Activated naive CD4-positive, alpha-beta T cell treated with anti-CD3 and anti-CD28 coated beads for 36 hours (primary cell): ENCODE measurements at regions of chr16 and their contacts with region 1.

Region 1: DNA sequence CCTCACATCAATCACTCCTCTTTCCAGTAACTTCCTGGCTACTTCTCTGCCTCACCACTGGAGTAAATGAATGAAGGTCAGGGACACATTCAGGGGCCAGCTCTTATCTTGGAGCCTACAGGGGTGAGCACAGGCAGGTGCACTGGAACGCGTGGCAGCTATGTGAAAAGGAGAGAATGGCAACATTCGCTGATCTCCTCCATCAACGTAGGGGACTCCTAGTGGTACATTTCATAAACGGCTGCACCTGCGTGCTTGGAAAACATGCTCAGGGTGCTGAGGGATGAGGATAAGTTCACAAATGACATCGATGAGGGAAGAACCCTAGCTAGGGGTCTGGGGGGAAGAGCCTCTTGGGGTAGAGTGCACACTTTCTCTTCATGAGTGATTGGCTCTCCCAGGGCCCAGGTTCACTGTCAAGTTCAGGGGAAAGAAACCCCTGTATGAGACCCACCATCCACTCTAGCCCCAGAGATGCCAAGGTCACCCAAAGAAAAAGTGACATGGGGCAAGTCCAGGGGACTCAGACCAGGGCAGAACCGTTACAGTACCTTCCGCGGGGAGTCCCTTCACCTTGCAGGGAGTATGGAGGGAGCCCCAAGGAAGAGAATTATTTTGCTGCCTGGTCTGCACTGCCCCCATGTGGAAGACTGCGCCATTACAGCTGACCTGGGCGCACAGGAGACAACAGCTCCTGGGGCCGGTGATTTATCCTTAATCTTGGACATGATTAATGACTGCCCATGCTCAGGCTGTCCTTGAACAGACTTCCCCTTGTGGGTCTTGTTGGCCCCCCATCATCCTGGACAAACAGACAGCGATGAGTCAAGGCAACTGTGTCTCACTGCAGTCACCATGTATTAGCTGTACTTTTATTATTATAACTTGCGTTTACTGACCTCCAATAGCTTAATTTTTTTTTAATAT is 30.1 kb downstream of the VAC14 start:
- DNase-seq: peak; percentile 83
- H3K4me3 Mint-ChIP-seq: no peak overlapping the region
- H3K27ac Mint-ChIP-seq: no peak overlapping the region
- H3K4me1 Mint-ChIP-seq: peaks cover 3% of the 10 kb centered on the region
- H3K27me3 Mint-ChIP-seq: no peaks in the 10 kb centered on the region

Region 2: GRCh38 chr16:70370924-70371323 is 400.0 kb before region 1 on chr16:
- CTCF ChIA-PET with region 1: no interaction called
- intact Hi-C with region 1: loop called (anchors 1 kb)
- DNase-seq: no peak
- H3K4me3 Mint-ChIP-seq: no peak overlapping the region
- H3K27ac Mint-ChIP-seq: no peak overlapping the region
- H3K4me1 Mint-ChIP-seq: peaks cover 2% of the 10 kb centered on the region
- H3K27me3 Mint-ChIP-seq: no peaks in the 10 kb centered on the region

Region 3: DNA sequence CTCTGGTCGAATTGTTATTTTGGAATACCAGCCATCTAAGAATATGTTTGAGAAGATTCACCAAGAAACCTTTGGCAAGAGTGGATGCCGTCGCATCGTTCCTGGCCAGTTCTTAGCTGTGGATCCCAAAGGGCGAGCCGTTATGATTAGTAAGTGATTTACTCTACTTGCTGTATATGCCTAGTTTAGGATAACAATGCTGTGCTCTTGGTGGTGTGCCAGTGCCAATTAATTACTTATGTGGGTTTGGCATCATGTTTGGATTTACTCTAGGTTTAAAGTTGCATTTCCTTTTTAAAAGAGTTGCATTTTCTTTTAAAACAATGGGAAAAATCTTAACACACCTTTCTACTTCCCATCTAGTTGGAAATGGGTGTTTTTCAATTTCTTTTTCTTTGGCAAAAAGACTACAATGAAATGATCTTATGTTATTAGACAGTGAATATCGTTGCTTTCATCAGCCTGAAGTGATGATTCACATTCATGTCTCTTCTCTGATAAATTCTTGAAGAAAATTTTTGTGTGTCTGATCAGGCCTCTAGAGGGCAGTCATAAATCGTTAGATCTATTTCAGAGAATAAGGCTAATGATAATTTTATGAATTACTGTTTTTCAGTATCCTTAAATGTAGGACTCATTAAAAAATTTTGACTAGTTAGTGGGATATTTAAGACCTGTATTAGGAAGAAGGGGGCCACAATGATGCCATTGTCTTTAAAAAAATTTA is 241.7 kb before region 1 on chr16:
- CTCF ChIA-PET with region 1: no interaction called
- intact Hi-C with region 1: no loop called
- DNase-seq: no peak
- H3K4me3 Mint-ChIP-seq: peak overlapping the region; percentile 15
- H3K27ac Mint-ChIP-seq: peak overlapping the region; percentile 70
- H3K4me1 Mint-ChIP-seq: peaks cover 60% of the 10 kb centered on the region
- H3K27me3 Mint-ChIP-seq: no peaks in the 10 kb centered on the region

Region 4: DNA sequence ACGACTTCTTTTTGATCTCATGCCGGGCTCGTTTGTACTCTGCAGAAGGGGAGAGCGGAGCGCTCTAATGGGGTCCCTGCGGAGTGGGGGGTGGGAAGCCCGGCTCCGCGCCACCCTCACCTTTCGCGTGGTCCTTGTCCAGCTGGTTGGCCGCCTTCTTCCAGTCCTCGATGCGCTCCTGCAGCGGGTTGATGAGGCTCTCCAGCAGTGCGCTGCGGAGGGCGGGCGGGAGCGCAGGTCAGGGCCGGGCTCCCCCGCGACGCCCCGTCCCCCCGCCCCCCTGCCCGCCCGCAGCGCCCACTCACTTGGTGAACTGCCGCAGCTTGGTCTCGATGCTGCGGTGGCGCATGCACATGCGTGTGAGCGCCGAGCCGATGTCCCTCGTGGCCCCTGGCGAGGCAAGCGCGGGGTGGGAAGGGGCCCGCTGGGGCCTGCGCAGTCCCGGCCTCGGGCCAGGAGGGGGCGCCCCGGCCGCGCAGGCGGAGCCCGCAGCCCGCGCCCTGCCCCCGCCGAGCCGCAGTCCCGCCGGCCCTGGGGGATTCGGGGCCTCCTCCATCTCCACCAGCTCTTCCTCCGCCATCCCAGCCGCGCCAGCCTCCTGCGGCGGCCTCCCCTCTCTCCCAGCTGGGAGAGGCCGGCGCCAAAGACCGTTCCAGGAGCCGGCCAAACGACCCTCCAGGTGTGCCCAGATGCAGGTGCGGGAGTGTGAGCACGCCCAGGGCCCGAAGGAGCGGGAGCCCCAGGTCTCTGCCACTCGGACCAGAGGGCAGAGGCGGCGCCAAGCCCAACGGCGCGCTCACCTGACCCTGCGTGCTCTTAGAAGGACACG is 91.0 kb before region 1 on chr16:
- CTCF ChIA-PET with region 1: interaction called, 70 read pairs
- intact Hi-C with region 1: loop called (anchors 1 kb)
- DNase-seq: no peak
- H3K4me3 Mint-ChIP-seq: no peak overlapping the region
- H3K27ac Mint-ChIP-seq: no peak overlapping the region
- H3K4me1 Mint-ChIP-seq: no peaks in the 10 kb centered on the region
- H3K27me3 Mint-ChIP-seq: peaks cover 3% of the 10 kb centered on the region

Region 5: DNA sequence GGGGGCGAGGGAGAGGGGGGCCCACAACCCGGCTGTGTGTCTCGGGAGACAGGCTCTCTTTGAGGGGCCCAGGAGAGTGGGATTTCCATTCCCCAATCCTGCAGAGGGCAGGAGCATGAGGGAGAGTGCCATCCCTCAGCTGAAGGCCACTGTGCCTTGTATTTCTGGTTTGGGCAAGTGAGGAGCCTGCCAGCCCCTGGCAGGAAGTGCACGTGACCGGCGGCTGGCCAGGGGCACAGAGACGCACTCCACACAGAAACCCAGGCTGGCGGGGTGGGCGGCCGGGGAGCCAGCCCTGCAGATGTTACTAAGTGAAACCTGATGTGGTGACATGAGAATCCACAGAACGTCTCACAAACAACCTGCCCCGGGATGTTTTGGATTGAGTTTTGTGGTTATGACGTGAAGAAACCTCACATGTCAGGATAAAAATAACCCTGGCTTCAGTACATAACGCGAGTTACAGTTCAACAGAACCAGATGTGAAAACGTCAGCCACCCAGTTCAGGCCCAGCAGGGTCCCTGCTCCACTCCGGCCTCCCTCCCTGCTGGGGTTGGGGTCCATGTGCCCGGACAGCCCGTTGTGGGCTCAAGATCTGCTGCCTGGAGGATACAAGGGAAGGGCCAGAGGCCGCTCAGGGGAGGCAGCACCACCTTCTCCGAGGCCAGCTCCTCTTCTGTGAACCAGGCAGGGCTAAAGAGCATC is 33.4 kb before region 1 on chr16:
- CTCF ChIA-PET with region 1: interaction called, 13 read pairs
- intact Hi-C with region 1: loop called (anchors 1 kb)
- DNase-seq: peak; percentile 87
- H3K4me3 Mint-ChIP-seq: peak overlapping the region; percentile 55
- H3K27ac Mint-ChIP-seq: peak overlapping the region; percentile 93
- H3K4me1 Mint-ChIP-seq: peaks cover 66% of the 10 kb centered on the region
- H3K27me3 Mint-ChIP-seq: no peaks in the 10 kb centered on the region